CD8-positive, alpha-beta T cell (primary cell): ENCODE measurements at regions of chr19 and their contacts with region 1.

Region 1: DNA sequence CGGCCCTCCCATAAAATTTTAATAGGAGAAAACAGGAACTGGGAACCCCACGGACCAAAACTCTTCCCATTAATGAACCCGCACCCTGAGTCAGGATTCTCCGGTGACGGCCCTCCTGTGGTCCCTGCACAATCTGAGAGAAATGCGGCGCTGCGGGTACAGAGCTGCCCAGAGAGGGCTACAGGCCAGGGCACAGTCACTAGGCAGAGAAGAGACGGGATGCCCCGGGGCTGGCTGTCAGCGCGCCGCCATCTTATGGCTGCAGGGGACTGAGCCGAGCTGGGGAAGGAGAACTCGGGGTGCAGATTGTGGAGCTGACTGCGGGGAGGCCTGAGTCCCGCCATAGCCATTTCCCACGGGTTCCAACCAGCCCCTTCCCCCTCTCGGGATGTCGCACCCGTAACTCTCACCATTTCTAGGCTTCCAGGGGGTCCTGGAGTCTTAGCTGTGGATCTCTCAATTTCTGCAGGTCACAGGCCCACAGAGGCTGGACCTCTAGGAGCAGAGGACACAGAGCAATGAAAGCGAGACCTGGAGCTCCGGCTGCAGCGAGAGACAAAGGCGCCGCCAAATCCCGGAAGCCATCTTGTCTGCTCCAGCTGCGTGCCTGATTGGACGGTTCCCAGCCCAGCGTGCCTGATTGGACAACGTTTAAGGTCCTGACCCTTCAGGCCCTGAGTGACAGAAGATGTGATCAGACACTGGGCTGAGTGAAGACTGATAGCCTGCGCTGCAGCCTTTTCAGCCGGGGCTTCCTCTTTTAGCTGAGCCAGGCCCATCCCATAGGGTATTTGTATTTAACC is at the start of gene ZNF675:
- DNase-seq: peak; percentile 73 to 95 (median 89)
- ATAC-seq: peak; percentile 92
- H3K4me3 ChIP-seq: peak within 1 kb of the TSS; percentile 76 to 99
- H3K4me3 Mint-ChIP-seq: peak within 1 kb of the TSS; percentile 99
- H3K27ac ChIP-seq: peak within 1 kb of the TSS; percentile 90 to 93
- H3K27ac Mint-ChIP-seq: peak within 1 kb of the TSS; percentile 98
- H3K4me1 ChIP-seq: peaks cover 20% of the 10 kb centered on the region
- H3K4me1 Mint-ChIP-seq: peaks cover 52% of the 10 kb centered on the region
- H3K27me3 ChIP-seq: no peaks in the 10 kb centered on the region
- H3K27me3 Mint-ChIP-seq: no peaks in the 10 kb centered on the region
- CTCF ChIP-seq: no peak
- total RNA-seq, gene ZNF675: 19.5 to 20.5 TPM

Region 2: GRCh38 chr19:23249911-23250649 is 436.7 kb before region 1 on chr19 and contains the start of gene ZNF724:
- CTCF ChIA-PET with region 1: no interaction called
- POLR2A ChIA-PET with region 1: interaction called, 5 read pairs
- intact Hi-C with region 1: loop called in 1 of 2 experiments (anchors 1 kb)
- DNase-seq: peak; percentile 78 to 94 (median 88)
- ATAC-seq: peak; percentile 99
- H3K4me3 ChIP-seq: peak within 1 kb of the TSS; percentile 77 to 99
- H3K4me3 Mint-ChIP-seq: peak within 1 kb of the TSS; percentile 96
- H3K27ac ChIP-seq: peak within 1 kb of the TSS; percentile 54 to 62
- H3K27ac Mint-ChIP-seq: peak within 1 kb of the TSS; percentile 81
- H3K4me1 ChIP-seq: no peaks in the 10 kb centered on the region
- H3K4me1 Mint-ChIP-seq: peaks cover 12% of the 10 kb centered on the region
- H3K27me3 ChIP-seq: no peaks in the 10 kb centered on the region
- H3K27me3 Mint-ChIP-seq: no peaks in the 10 kb centered on the region
- CTCF ChIP-seq: no peak
- total RNA-seq, gene ZNF724: 3.6 to 4.2 TPM

Region 3: GRCh38 chr19:23571175-23571574 is 115.6 kb before region 1 on chr19:
- CTCF ChIA-PET with region 1: no interaction called
- POLR2A ChIA-PET with region 1: no interaction called
- intact Hi-C with region 1: no loop called
- DNase-seq: no peak
- ATAC-seq: no peak
- H3K4me3 ChIP-seq: no peak overlapping the region
- H3K4me3 Mint-ChIP-seq: no peak overlapping the region
- H3K27ac ChIP-seq: no peak overlapping the region
- H3K27ac Mint-ChIP-seq: no peak overlapping the region
- H3K4me1 ChIP-seq: no peaks in the 10 kb centered on the region
- H3K4me1 Mint-ChIP-seq: no peaks in the 10 kb centered on the region
- H3K27me3 ChIP-seq: no peaks in the 10 kb centered on the region
- H3K27me3 Mint-ChIP-seq: no peaks in the 10 kb centered on the region
- CTCF ChIP-seq: no peak

Region 4: GRCh38 chr19:23758187-23759074 is 71.6 kb after region 1 on chr19 and contains the start of gene ZNF681:
- CTCF ChIA-PET with region 1: no interaction called
- POLR2A ChIA-PET with region 1: interaction called, 37 read pairs
- intact Hi-C with region 1: loop called (anchors 1 kb)
- DNase-seq: peak; percentile 67 to 93 (median 86)
- ATAC-seq: peak; percentile 85
- H3K4me3 ChIP-seq: peak within 1 kb of the TSS; percentile 82 to 95
- H3K4me3 Mint-ChIP-seq: peak within 1 kb of the TSS; percentile 95
- H3K27ac ChIP-seq: peak within 1 kb of the TSS; percentile 77 to 85
- H3K27ac Mint-ChIP-seq: peak within 1 kb of the TSS; percentile 97
- H3K4me1 ChIP-seq: peaks cover 18% of the 10 kb centered on the region
- H3K4me1 Mint-ChIP-seq: peaks cover 37% of the 10 kb centered on the region
- H3K27me3 ChIP-seq: no peaks in the 10 kb centered on the region
- H3K27me3 Mint-ChIP-seq: no peaks in the 10 kb centered on the region
- CTCF ChIP-seq: no peak
- total RNA-seq, gene ZNF681: 1.7 to 1.8 TPM

Region 5: GRCh38 chr19:23914402-23915301 is 227.8 kb after region 1 on chr19 and contains the start of gene ZNF726:
- CTCF ChIA-PET with region 1: no interaction called
- POLR2A ChIA-PET with region 1: interaction called, 7 read pairs
- intact Hi-C with region 1: loop called (anchors 2 to 5 kb)
- DNase-seq: peak; percentile 74 to 94 (median 86)
- ATAC-seq: peak; percentile 98
- H3K4me3 ChIP-seq: peak within 1 kb of the TSS; percentile 56 to 72
- H3K4me3 Mint-ChIP-seq: peak within 1 kb of the TSS; percentile 94
- H3K27ac ChIP-seq: peak within 1 kb of the TSS; percentile 43 to 47
- H3K27ac Mint-ChIP-seq: peak within 1 kb of the TSS; percentile 88
- H3K4me1 ChIP-seq: peaks cover 6% of the 10 kb centered on the region
- H3K4me1 Mint-ChIP-seq: peaks cover 13% of the 10 kb centered on the region
- H3K27me3 ChIP-seq: no peaks in the 10 kb centered on the region
- H3K27me3 Mint-ChIP-seq: no peaks in the 10 kb centered on the region
- CTCF ChIP-seq: no peak
- total RNA-seq, gene ZNF726: 3.5 to 4.4 TPM

Region 6: GRCh38 chr19:24086974-24087595 is 400.3 kb after region 1 on chr19 and contains the start of gene ZNF254:
- CTCF ChIA-PET with region 1: no interaction called
- POLR2A ChIA-PET with region 1: interaction called, 3 read pairs
- intact Hi-C with region 1: loop called (anchors 5 to 10 kb)
- DNase-seq: peak; percentile 58 to 91 (median 78)
- ATAC-seq: peak; percentile 99
- H3K4me3 ChIP-seq: peak within 1 kb of the TSS; percentile 70 to 99
- H3K4me3 Mint-ChIP-seq: peak within 1 kb of the TSS; percentile 96
- H3K27ac ChIP-seq: peak within 1 kb of the TSS; percentile 80 to 92
- H3K27ac Mint-ChIP-seq: peak within 1 kb of the TSS; percentile 97
- H3K4me1 ChIP-seq: peaks cover 10% of the 10 kb centered on the region
- H3K4me1 Mint-ChIP-seq: peaks cover 24% of the 10 kb centered on the region
- H3K27me3 ChIP-seq: no peaks in the 10 kb centered on the region
- H3K27me3 Mint-ChIP-seq: no peaks in the 10 kb centered on the region
- CTCF ChIP-seq: no peak
- total RNA-seq, gene ZNF254: 11.2 to 14.2 TPM

Region 7: DNA sequence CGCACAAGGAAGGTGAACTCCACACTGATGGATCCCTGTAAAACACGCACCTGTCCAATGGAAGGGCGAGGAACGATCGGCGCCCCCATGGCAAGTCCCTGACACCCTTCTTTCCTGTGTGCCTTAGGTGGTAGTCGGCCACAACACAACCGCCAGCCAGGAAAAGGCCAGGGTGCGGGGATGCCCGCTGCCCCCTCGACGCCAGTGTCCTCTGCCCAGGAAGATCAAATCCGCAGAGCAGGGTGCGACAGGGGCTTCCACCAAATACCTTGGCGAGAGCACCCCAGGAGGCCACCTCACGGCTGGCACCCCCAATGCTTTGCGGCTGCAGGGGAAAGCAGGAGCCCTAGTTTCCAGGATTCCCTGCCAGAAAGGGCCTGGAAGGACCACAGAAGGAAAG is 491.4 kb after region 1 on chr19:
- CTCF ChIA-PET with region 1: no interaction called
- POLR2A ChIA-PET with region 1: no interaction called
- intact Hi-C with region 1: no loop called
- DNase-seq: no peak
- ATAC-seq: no peak
- H3K4me3 ChIP-seq: no peak overlapping the region
- H3K4me3 Mint-ChIP-seq: no peak overlapping the region
- H3K27ac ChIP-seq: no peak overlapping the region
- H3K27ac Mint-ChIP-seq: no peak overlapping the region
- H3K4me1 ChIP-seq: no peaks in the 10 kb centered on the region
- H3K4me1 Mint-ChIP-seq: no peaks in the 10 kb centered on the region
- H3K27me3 ChIP-seq: no peaks in the 10 kb centered on the region
- H3K27me3 Mint-ChIP-seq: no peaks in the 10 kb centered on the region
- CTCF ChIP-seq: no peak